A549 (cell line): ENCODE measurements at regions of chr6 and their contacts with region 1.

Region 1: GRCh38 chr6:52577022-52577777 is at the start of gene TRAM2:
- DNase-seq: peak; percentile 40 to 72
- ATAC-seq: peak; percentile 84 to 86
- H3K4me3 ChIP-seq: peak within 1 kb of the TSS; percentile 69
- H3K27ac ChIP-seq: peak within 1 kb of the TSS; percentile 95 to 100
- H3K4me1 ChIP-seq: peaks cover 39% of the 10 kb centered on the region
- CTCF ChIP-seq: no peak
- EP300 ChIP-seq: no peak
- POLR2A ChIP-seq: peak; percentile 59
- RAD21 ChIP-seq: no peak; a peak in 1 of 5 replicates
- polyA plus RNA-seq, gene TRAM2: 25.4 and 25.6 TPM in 2 replicates

Region 2: GRCh38 chr6:52503848-52504781 is 73.1 kb before region 1 on chr6:
- CTCF ChIA-PET with region 1: interaction called, 29 read pairs
- POLR2A ChIA-PET with region 1: interaction called, 19 read pairs
- DNase-seq: peak; percentile 89 to 97
- ATAC-seq: peak; percentile 82 to 90
- H3K4me3 ChIP-seq: peak overlapping the region; percentile 14; the same call in 1 of the 3 replicates
- H3K27ac ChIP-seq: peak overlapping the region; percentile 82 to 97
- H3K4me1 ChIP-seq: peaks cover 48% of the 10 kb centered on the region
- CTCF ChIP-seq: no peak
- EP300 ChIP-seq: peak; percentile 56 to 79; a peak in 2 of 5 replicates
- POLR2A ChIP-seq: no peak
- RAD21 ChIP-seq: peak in 1 of 2 experiments; percentile 11; a peak in 3 of 5 replicates

Region 3: DNA sequence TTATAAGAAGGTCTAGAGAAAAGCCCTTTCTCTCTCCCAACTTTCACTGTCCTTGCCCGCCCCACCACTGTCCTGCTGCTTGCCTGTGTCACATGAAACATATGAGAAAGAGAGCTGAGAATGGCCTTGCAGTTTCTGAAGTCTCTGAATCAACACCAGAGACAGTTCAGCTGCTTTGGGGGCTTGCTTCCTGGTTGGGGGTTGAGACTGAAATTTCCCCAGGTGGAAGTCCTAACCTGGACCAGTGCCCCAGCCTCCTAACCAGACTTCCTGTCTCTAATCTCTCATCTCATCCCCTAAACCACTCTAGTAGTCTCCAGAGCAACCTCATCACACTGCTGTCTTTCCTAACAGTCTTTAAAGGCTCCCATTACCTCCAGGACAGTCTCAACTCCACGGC is 11.0 kb before region 1 on chr6:
- CTCF ChIA-PET with region 1: interaction called, 12 read pairs
- POLR2A ChIA-PET with region 1: interaction called, 5 read pairs
- DNase-seq: no peak
- ATAC-seq: peak in 1 of 2 experiments; percentile 15; a peak in 1 of 6 replicates
- H3K4me3 ChIP-seq: no peak overlapping the region
- H3K27ac ChIP-seq: peak overlapping the region; percentile 67 to 69; a peak in 5 of 6 replicates
- H3K4me1 ChIP-seq: peaks cover 54% of the 10 kb centered on the region
- CTCF ChIP-seq: no peak
- EP300 ChIP-seq: no peak
- POLR2A ChIP-seq: no peak
- RAD21 ChIP-seq: no peak